PC-9 (cell line): ENCODE measurements at regions of chr4 and their contacts with region 1.

Region 1: GRCh38 chr4:140373328-140374129 is at the start of gene SCOC:
- DNase-seq: peak; percentile 96 to 99
- H3K4me3 ChIP-seq: peak within 1 kb of the TSS; percentile 81
- H3K27ac ChIP-seq: peak within 1 kb of the TSS; percentile 81
- H3K4me1 ChIP-seq: peaks cover 25% of the 10 kb centered on the region
- H3K27me3 ChIP-seq: no peaks in the 10 kb centered on the region
- CTCF ChIP-seq: no peak
- total RNA-seq, gene SCOC: 41.7 and 53.0 TPM in 2 replicates

Region 2: GRCh38 chr4:139696491-139696890 is 677.0 kb before region 1 on chr4:
- CTCF ChIA-PET with region 1: no interaction called
- POLR2A ChIA-PET with region 1: no interaction called
- intact Hi-C with region 1: no loop called
- DNase-seq: no peak
- H3K4me3 ChIP-seq: no peak overlapping the region
- H3K27ac ChIP-seq: no peak overlapping the region
- H3K4me1 ChIP-seq: no peaks in the 10 kb centered on the region
- H3K27me3 ChIP-seq: no peaks in the 10 kb centered on the region
- CTCF ChIP-seq: no peak

Region 3: DNA sequence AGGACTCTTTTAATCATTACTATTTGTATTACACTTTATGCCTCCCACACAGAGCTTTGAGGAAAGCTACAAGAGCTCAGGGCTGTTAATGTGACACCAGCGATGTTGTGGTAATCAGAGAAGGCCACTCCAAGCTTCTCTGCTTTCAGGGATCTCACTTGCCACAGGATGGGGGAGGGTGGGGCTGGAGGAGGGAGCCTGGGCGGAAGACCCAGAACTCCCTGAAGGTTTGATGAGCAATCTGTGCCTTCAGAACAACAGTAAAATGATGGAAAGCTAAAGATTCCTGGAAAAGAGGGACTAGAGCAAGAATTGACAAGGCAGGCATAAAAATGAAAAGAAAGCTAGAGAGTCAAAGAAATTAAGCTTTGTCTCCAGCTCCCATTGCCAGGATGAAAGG is 295.2 kb before region 1 on chr4:
- CTCF ChIA-PET with region 1: no interaction called
- POLR2A ChIA-PET with region 1: no interaction called
- intact Hi-C with region 1: no loop called
- DNase-seq: no peak
- H3K4me3 ChIP-seq: no peak overlapping the region
- H3K27ac ChIP-seq: peak overlapping the region; percentile 14; the same call in 1 of the 2 replicates
- H3K4me1 ChIP-seq: peaks cover 7% of the 10 kb centered on the region
- H3K27me3 ChIP-seq: no peaks in the 10 kb centered on the region
- CTCF ChIP-seq: no peak

Region 4: DNA sequence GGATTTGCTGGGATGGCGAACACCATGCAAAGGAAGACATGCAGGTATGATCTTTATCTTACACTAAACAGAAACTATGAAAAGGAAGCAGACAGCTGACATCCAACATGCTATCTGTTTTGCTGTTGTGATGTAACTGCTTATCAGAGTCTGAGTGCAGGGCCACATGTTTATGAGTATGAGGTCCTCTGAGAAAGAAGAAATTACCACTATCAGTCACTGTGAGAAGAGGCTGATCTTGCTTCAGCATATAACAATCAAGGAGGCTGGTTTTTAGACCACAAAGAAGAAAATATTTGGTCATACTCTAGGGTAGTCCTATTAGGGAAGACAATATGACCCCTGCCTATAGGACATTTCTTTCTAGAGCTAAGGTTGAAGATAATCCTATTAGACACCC is 35.4 kb after region 1 on chr4:
- CTCF ChIA-PET with region 1: no interaction called
- POLR2A ChIA-PET with region 1: no interaction called
- intact Hi-C with region 1: no loop called
- DNase-seq: no peak
- H3K4me3 ChIP-seq: no peak overlapping the region
- H3K27ac ChIP-seq: no peak overlapping the region
- H3K4me1 ChIP-seq: no peaks in the 10 kb centered on the region
- H3K27me3 ChIP-seq: no peaks in the 10 kb centered on the region
- CTCF ChIP-seq: no peak

Region 5: DNA sequence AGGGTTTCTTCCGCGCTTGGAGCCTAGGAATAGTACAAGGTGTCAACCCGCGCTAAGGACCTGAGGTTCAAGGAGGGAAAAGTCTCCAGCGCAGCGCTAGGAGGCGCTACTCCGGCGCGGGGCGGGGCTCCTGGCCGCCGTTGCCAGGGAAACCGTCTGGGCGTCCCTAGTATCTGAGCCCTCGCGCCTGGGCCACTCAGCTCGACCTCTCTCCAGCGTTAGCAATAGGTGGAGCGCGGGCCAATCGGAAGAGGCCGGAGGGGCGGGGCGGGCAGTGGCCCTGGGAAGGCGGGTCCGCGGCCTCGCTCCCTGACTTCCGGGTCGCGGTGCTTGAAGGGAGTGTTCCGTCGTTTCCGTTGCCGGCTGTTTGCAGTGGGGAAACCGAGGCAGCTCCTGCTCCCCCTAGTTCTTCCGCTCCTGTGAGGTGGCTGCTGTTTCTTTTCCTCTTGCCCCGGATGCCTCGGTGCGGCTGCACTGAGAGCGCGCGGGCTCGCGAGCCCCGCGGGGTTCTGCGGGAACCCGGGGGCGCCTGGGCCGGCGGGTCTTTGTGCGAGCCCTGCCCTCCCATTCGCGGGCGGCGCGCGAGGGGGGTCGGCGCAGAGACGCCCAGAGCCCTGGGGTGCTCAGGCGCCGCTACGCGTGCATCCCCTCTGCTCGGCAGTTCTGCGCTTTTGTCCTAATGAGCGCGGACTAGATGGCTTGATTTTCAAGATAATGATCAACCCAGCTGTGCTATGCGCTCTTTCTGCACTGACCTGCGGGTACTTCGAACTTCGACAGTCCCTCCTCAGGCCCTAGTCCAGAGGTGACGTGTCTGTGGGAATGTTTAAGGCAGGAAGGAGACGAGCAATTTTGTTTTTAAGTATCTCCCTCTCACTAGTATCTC is 150.6 kb after region 1 on chr4 and contains the start of gene ELMOD2:
- CTCF ChIA-PET with region 1: interaction called, 3 read pairs
- POLR2A ChIA-PET with region 1: interaction called, 3 read pairs
- intact Hi-C with region 1: loop called (anchors 1 kb)
- DNase-seq: peak; percentile 86 to 96
- H3K4me3 ChIP-seq: peak within 1 kb of the TSS; percentile 88
- H3K27ac ChIP-seq: peak within 1 kb of the TSS; percentile 27; the same call in 1 of the 2 replicates
- H3K4me1 ChIP-seq: peaks cover 9% of the 10 kb centered on the region; the same call in 1 of the 2 replicates
- H3K27me3 ChIP-seq: no peaks in the 10 kb centered on the region
- CTCF ChIP-seq: peak; percentile 83
- total RNA-seq, gene ELMOD2: 24.7 and 29.9 TPM in 2 replicates

Region 6: DNA sequence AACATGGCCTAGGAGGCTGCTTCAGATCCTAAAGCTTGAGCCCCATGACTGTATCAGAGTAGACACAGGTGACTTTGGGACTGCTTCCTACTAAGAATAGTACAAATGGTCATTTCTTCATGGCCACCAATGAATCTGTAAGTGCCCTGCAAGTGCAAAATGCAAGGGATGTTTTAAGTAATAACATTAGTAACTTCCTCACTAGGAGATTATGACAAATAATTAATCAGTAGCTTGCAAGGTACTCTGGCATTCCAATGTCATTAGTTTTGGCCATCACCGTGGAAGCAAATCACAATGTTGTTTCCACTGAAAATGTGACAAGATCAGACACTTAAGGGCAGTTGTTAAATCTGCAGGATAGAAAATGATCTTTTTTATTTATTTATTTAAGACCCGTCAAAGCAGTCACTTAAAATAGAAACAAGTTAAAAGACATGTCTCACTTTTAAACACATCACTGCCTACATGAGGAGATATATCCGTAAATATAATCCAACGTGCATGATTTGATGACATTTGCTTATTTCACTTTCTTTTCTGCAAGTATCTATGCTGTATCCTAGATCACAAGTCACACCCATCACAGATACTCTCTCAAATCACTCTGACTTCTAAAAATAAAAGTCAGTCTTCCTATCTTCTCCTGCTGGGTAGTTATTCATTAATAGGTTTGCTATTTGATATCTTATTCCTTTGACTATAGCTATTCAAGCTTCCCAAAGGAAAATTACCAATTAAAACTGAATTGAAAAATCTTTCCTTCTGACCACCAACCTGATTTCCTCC is 1663.5 kb after region 1 on chr4:
- CTCF ChIA-PET with region 1: no interaction called
- POLR2A ChIA-PET with region 1: no interaction called
- intact Hi-C with region 1: no loop called
- DNase-seq: no peak
- H3K4me3 ChIP-seq: no peak overlapping the region
- H3K27ac ChIP-seq: no peak overlapping the region
- H3K4me1 ChIP-seq: no peaks in the 10 kb centered on the region
- H3K27me3 ChIP-seq: no peaks in the 10 kb centered on the region
- CTCF ChIP-seq: no peak